ENCODE measurements at regions of chr1 and their contacts with region 1.

Region 1: GRCh38 chr1:27300341-27301051 is 21.5 kb upstream of the TMEM222 start:
- DNase-seq: peak; percentile 80 to 82
- H3K4me3 ChIP-seq: no peak overlapping the region
- H3K27ac ChIP-seq: peak overlapping the region; percentile 91 to 94
- H3K4me1 ChIP-seq: peaks cover 23% of the 10 kb centered on the region in 2 donors
- H3K27me3 ChIP-seq: no peaks in the 10 kb centered on the region
- CTCF ChIP-seq: peak; percentile 99
- POLR2A ChIP-seq: no peak

Region 2: GRCh38 chr1:26417111-26417759 is 883.3 kb before region 1 on chr1:
- intact Hi-C with region 1: loop called (anchors 5 kb)
- DNase-seq: peak in 1 of 2 donors; percentile 68
- H3K4me3 ChIP-seq: no peak overlapping the region
- H3K27ac ChIP-seq: no peak overlapping the region
- H3K4me1 ChIP-seq: no peaks in the 10 kb centered on the region
- H3K27me3 ChIP-seq: peaks cover 0 to 28% of the 10 kb centered on the region in 2 donors
- CTCF ChIP-seq: peak in 2 of 3 donors; percentile 32 to 34
- POLR2A ChIP-seq: no peak

Region 3: GRCh38 chr1:27241677-27242076 is 58.8 kb before region 1 on chr1:
- intact Hi-C with region 1: no loop called
- DNase-seq: no peak
- H3K4me3 ChIP-seq: no peak overlapping the region
- H3K27ac ChIP-seq: no peak overlapping the region
- H3K4me1 ChIP-seq: no peaks in the 10 kb centered on the region
- H3K27me3 ChIP-seq: no peaks in the 10 kb centered on the region
- CTCF ChIP-seq: no peak
- POLR2A ChIP-seq: no peak

Region 4: DNA sequence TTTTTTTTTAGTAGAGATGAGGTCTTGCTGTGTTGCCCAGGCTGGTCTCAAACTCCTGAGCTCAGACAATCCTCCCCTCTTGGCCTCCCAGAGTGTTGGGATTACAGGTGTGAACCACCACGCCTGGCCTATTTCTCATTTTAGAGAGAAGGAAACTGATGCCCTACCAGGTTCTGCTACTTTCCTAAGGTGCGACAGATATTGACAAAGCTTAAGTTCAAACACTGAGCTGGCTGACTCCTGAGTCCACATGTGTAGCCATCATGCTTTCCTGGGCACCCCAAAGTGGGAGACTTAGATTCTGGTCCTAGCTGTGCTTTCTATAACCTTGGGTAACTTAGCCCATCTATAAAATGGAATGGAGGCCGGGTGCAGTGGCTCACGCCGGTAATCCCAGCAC is 16.4 kb after region 1 on chr1:
- intact Hi-C with region 1: loop called (anchors 1 kb)
- DNase-seq: no peak
- H3K4me3 ChIP-seq: no peak overlapping the region
- H3K27ac ChIP-seq: no peak overlapping the region
- H3K4me1 ChIP-seq: no peaks in the 10 kb centered on the region
- H3K27me3 ChIP-seq: peaks cover 0 to 4% of the 10 kb centered on the region in 2 donors
- CTCF ChIP-seq: no peak
- POLR2A ChIP-seq: no peak

Region 5: GRCh38 chr1:27365372-27366112 is 65.0 kb after region 1 on chr1:
- intact Hi-C with region 1: loop called (anchors 10 kb)
- DNase-seq: peak; percentile 88 to 90
- H3K4me3 ChIP-seq: peak overlapping the region; percentile 72 to 84 (median 79)
- H3K27ac ChIP-seq: peak overlapping the region; percentile 97 to 98
- H3K4me1 ChIP-seq: peaks cover 5 to 34% of the 10 kb centered on the region in 2 donors
- H3K27me3 ChIP-seq: no peaks in the 10 kb centered on the region
- CTCF ChIP-seq: no peak
- POLR2A ChIP-seq: no peak

Region 6: DNA sequence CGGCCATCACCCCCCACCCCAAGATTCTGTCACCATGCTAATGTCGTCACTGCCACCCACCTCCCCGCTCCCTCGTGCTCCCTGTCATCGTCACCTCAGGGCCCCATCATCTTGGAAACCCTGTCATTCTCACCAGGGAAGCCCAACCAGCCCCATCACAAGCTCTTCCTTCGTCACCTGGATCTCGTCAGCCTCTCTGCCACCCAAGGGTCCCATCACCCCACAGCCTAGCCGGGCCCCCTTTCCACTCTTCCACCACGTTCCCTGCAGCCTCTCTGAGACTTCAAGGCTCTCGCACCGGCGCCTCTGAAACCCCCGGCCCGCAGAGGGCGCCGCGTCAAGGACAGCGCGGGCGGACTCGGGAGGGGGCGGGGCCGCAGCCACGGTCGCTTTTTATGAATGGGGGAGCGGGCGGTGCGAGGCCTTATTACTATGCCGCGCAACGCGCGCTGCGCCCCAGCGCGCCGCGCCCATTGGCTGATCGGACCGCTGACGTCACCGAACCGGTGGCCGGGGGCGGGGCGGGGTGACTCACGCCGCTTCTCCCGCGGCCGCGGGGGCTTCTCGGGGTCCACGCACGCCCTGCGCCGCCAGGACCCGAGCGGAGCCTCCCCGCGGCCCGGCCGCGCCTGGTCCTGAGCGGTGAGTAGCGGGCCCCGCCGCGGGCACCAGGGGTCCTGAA is 91.7 kb after region 1 on chr1 and contains the start of gene GPR3:
- intact Hi-C with region 1: loop called (anchors 10 kb)
- DNase-seq: peak; percentile 86 to 87
- H3K4me3 ChIP-seq: peak within 1 kb of the TSS; percentile 33 to 75 (median 54)
- H3K27ac ChIP-seq: peak within 1 kb of the TSS; percentile 46 to 71
- H3K4me1 ChIP-seq: peaks cover 0 to 8% of the 10 kb centered on the region in 2 donors
- H3K27me3 ChIP-seq: no peaks in the 10 kb centered on the region
- CTCF ChIP-seq: peak; percentile 14 to 47 (median 42)
- POLR2A ChIP-seq: no peak
- total RNA-seq, gene GPR3: 0.16 to 0.66 TPM in 2 of 3 donors, not detected in the other

Measured in breast epithelium (tissue), 4 donors.